Thyroid gland (tissue), 4 donors: ENCODE measurements at regions of chr4 and their contacts with region 1.

Region 1: DNA sequence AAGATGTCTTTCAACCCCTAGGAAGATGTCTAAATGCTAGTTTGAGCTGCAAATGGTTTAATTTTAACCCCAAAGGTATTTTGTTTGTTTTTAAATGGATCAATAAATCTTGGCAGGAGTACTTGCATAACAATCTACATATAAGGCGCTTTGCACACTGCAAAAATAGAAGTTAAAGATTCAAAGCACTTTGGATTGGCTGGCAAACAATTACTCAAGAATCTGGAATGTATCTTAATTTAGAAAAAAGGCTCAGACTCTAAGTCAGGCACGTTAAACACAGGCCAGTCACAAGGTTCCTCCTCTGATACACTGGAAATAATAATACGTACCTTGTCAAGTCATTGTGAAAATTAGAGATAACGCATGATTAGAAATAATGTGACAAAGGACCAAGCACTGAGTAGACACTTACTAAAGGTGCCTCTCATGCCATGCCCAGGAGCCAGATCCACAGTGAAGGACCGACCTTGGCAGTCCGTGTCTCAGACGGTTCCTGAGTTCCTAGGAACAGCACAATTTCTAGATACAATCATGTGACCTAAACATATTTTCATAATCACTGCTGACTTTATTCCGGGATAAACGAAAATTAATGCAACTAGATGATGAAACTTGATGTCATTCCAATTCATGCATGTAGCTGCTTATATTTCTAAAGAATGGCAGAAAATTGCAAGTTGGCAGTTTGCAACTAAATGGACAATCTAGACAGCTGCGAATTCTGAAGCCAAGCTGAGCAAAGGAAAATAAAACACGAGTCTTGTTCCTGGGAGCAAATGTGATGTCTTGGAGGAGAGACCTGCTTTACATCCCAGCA is 49.6 kb downstream of the PROM1 start:
- DNase-seq: no peak
- H3K4me3 ChIP-seq: no peak overlapping the region
- H3K27ac ChIP-seq: peak overlapping the region in 1 of 3 donors; percentile 78
- H3K4me1 ChIP-seq: peaks cover 6 to 12% of the 10 kb centered on the region in 2 donors
- H3K27me3 ChIP-seq: no peaks in the 10 kb centered on the region
- CTCF ChIP-seq: no peak
- POLR2A ChIP-seq: no peak

Region 2: GRCh38 chr4:15794905-15795304 is 239.3 kb before region 1 on chr4:
- intact Hi-C with region 1: no loop called
- DNase-seq: no peak
- H3K4me3 ChIP-seq: no peak overlapping the region
- H3K27ac ChIP-seq: no peak overlapping the region
- H3K4me1 ChIP-seq: no peaks in the 10 kb centered on the region
- H3K27me3 ChIP-seq: no peaks in the 10 kb centered on the region
- CTCF ChIP-seq: no peak
- POLR2A ChIP-seq: no peak

Region 3: DNA sequence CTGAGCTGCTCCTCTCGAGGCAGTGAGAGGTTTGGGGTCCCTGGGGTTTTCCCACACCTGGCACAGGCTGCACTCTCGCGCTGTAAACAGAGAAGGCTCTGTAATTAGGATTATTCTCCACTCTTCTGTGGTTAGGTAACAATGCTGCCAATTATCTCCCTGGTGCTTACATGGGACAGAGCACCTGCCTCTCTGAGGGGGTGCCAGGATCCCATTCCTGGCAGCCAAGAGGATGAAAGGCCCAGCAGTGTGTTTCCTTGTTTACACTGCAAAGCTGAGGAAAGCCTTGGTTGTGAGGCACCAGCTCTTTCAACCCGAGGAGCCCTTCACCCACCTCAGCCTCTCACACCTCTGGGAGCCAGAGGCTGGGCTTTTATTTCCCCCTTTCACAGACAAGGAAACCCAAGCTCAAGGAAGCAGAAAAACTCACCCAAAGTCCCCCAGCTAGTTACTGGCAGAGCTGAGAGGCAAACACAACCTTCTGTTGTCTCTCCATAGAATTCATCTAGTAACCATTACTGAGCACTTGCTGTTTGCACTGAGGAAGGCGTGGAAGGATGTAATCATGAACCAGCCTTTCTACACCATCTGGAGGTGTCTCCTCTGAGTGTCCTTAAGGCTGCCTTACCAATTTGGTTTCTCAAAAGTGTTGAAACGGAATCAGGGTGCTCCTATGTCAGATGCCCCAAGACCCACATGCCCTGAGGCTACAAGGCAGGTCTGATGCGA is 89.3 kb after region 1 on chr4:
- intact Hi-C with region 1: no loop called
- DNase-seq: peak; percentile 43 to 61
- H3K4me3 ChIP-seq: no peak overlapping the region
- H3K27ac ChIP-seq: peak overlapping the region; percentile 65 to 87 (median 79)
- H3K4me1 ChIP-seq: peaks cover 22 to 26% of the 10 kb centered on the region in 2 donors
- H3K27me3 ChIP-seq: no peaks in the 10 kb centered on the region
- CTCF ChIP-seq: no peak
- POLR2A ChIP-seq: no peak

Region 4: GRCh38 chr4:16136311-16136710 is 102.1 kb after region 1 on chr4:
- intact Hi-C with region 1: no loop called
- DNase-seq: no peak
- H3K4me3 ChIP-seq: no peak overlapping the region
- H3K27ac ChIP-seq: no peak overlapping the region
- H3K4me1 ChIP-seq: peaks cover 5 to 22% of the 10 kb centered on the region in 2 donors
- H3K27me3 ChIP-seq: no peaks in the 10 kb centered on the region
- CTCF ChIP-seq: no peak
- POLR2A ChIP-seq: no peak

Region 5: GRCh38 chr4:16204505-16204904 is 170.3 kb after region 1 on chr4:
- intact Hi-C with region 1: loop called (anchors 5 kb)
- DNase-seq: peak; percentile 26 to 41
- H3K4me3 ChIP-seq: no peak overlapping the region
- H3K27ac ChIP-seq: no peak overlapping the region
- H3K4me1 ChIP-seq: peaks cover 5 to 15% of the 10 kb centered on the region in 2 donors
- H3K27me3 ChIP-seq: no peaks in the 10 kb centered on the region
- CTCF ChIP-seq: no peak
- POLR2A ChIP-seq: no peak